PC-9 (cell line): ENCODE measurements at regions of chr9 and their contacts with region 1.

Region 1: DNA sequence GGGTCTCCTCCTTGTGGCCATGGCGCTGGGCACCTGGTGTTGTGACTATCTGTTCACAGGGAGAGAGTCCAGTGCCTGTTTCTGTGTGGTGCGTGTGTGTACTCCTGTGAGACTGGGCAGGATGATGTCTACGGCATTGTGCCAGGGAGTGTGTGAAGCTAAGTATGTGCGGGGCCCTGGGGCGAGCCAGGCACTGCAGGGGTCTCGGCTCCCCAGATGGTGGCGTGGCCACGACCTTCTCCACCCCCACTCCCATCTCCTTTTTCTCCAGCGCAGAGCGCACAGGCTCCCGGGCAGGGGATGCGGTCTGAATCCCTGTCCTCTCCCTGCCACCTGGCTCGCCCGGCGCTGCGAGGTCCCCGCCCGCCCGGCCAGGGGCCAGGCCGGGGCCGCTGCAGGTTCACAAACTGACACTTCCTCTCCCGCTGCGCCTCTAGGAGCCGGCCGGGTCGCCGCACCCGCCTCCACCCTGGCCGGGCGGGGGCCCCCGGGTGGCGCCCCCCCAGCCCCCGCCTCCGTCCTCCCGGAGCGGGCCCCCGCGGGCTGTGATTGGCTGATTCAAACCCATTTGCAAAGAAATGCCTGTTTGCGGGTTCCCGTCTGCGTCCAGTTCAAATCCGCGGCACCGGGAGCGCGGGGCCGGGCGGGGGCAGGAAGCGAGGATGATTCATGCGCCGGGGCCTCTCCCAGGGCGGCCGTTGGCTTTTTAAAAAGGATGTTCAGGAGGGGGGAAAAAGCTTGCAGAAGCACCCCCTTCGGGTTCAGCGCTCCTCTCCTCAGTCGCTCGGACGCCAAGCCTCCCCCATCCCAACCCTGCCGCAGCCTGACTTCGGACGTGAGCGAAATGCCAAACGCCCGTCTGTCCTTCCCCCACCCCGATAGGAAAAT is 790 bp downstream of the PHF19 start:
- DNase-seq: peak; percentile 73 to 95
- H3K4me3 ChIP-seq: peak overlapping the region; percentile 87
- H3K27ac ChIP-seq: peak overlapping the region; percentile 76
- H3K4me1 ChIP-seq: peaks cover 49% of the 10 kb centered on the region
- H3K27me3 ChIP-seq: no peaks in the 10 kb centered on the region
- CTCF ChIP-seq: no peak

Region 2: GRCh38 chr9:120767456-120768167 is 108.6 kb before region 1 on chr9:
- CTCF ChIA-PET with region 1: no interaction called
- POLR2A ChIA-PET with region 1: no interaction called
- intact Hi-C with region 1: no loop called
- DNase-seq: peak; percentile 7 to 87
- H3K4me3 ChIP-seq: 0 out of 2 replicates have a peak overlapping the region, but pooled peaks have one; percentile 6
- H3K27ac ChIP-seq: peak overlapping the region; percentile 43
- H3K4me1 ChIP-seq: peaks cover 35% of the 10 kb centered on the region
- H3K27me3 ChIP-seq: no peaks in the 10 kb centered on the region
- CTCF ChIP-seq: no peak

Region 3: DNA sequence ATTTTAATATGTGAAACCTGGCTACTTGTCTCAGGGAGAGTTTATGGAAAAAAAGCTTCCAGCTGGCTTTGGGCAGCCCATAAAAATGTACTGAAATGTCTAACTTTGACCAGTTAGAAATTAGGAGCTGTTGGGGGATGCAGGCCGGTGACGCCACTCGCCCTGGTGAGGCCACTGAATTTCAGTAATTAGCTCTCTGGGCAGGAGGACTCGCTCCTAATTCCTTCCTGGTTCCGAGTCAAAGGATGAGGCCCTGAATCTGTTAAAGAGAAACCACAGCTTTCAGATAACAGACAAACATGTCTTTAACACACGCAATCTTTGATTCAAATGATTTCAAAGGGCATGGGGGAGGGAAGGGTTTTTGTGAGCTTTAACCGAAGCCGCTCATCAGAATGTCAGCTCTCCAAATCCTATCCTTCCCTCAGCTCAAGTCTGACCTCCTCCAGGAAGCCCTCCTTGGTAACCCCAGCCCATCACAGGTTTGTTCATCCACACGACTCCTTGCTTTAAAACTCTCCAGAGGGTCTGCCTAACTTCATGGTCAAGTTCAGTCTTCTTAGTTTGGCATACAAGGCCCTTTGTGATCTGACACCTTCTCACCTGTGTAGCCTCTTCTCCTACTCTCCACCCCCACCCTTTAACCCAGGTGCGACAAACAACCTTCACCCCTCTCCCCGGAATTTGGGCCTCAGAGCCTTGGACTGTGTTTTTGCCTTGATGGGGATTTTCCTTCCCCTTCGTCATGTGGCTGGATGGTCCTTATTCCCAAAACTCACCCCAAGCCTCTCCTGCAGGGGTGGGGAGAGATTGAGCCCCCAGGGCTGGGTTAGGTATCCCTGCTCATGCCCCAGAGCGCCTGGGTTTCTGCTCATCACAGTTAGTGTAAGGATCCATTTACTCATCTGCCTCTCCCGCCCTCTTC is 14.4 kb after region 1 on chr9:
- CTCF ChIA-PET with region 1: interaction called, 15 read pairs
- POLR2A ChIA-PET with region 1: no interaction called
- intact Hi-C with region 1: no loop called
- DNase-seq: no peak
- H3K4me3 ChIP-seq: no peak overlapping the region
- H3K27ac ChIP-seq: no peak overlapping the region
- H3K4me1 ChIP-seq: peaks cover 21% of the 10 kb centered on the region
- H3K27me3 ChIP-seq: no peaks in the 10 kb centered on the region
- CTCF ChIP-seq: no peak